ENCODE measurements at regions of chr12 and their contacts with region 1.

Region 1: GRCh38 chr12:48105862-48106680 is at the start of gene SENP1:
- DNase-seq: peak; percentile 81
- ATAC-seq: peak; percentile 92
- H3K4me3 ChIP-seq: peak within 1 kb of the TSS; percentile 83
- H3K27ac ChIP-seq: peak within 1 kb of the TSS; percentile 93
- H3K4me1 ChIP-seq: peaks cover 7% of the 10 kb centered on the region
- H3K27me3 ChIP-seq: 0 out of 2 replicates have a peak, but pooled peaks cover 3% of the 10 kb centered on the region
- CTCF ChIP-seq: no peak
- POLR2A ChIP-seq: peak; percentile 59; the same call in 1 of the 2 replicates
- RAD21 ChIP-seq: no peak
- total RNA-seq, gene SENP1: 22.5 and 25.3 TPM in 2 replicates

Region 2: GRCh38 chr12:48157018-48157888 is 51.2 kb after region 1 on chr12 and contains the start of gene ASB8:
- CTCF ChIA-PET with region 1: interaction called, 3 read pairs
- POLR2A ChIA-PET with region 1: no interaction called
- dilution Hi-C with region 1: no loop called
- in situ Hi-C with region 1: no loop called
- intact Hi-C with region 1: loop called (anchors 2 kb)
- DNase-seq: peak; percentile 97
- ATAC-seq: peak; percentile 99
- H3K4me3 ChIP-seq: peak within 1 kb of the TSS; percentile 68
- H3K27ac ChIP-seq: peak within 1 kb of the TSS; percentile 74
- H3K4me1 ChIP-seq: peaks cover 2% of the 10 kb centered on the region; the same call in 1 of the 2 replicates
- H3K27me3 ChIP-seq: peaks cover 2% of the 10 kb centered on the region; the same call in 1 of the 2 replicates
- CTCF ChIP-seq: peak; percentile 48
- POLR2A ChIP-seq: no peak
- RAD21 ChIP-seq: no peak
- total RNA-seq, gene ASB8: 20.8 and 26.7 TPM in 2 replicates

Measured in IMR-90 (cell line).